Activated CD4-positive, alpha-beta memory T cell treated with anti-CD3 and anti-CD28 coated beads for 36 hours (primary cell): ENCODE measurements at regions of chr12 and their contacts with region 1.

Region 1: DNA sequence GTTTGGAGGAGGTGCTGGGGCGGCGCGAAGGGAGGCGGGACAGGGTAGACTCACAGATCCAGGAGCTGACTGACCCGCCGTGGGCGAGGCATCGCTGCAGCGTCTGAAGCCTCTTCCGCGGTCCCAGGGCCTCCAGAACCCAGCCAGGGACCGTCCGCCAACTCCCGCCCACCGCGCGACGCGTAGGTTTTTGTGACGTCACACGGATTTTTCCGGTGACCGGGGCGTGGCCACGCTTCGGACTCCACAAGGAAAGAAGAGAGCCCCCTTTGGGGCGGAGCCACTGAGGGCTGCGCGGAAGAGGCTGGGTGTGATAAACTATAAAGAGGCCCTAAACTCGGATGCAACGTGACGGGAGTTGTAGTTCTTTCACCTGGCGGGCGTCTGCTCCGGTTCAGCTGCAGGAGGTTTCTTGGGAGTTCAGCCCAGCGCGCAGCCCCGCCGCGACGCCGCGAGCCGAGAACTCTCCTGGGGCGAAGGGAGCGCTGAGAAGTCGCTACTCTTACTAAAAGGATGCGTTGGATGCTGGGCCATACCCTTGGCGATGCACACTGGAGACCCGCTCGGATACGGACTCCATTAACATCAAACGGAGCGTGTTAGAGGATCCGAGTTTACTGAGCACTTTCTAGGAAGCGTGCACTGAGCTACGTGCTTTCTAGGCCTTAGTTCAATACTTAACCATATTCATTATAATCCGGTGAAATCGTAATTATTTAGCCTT is at the start of gene AMN1:
- DNase-seq: peak; percentile 100
- H3K4me3 Mint-ChIP-seq: peak within 1 kb of the TSS; percentile 96
- H3K27ac Mint-ChIP-seq: peak within 1 kb of the TSS; percentile 97
- H3K4me1 Mint-ChIP-seq: peaks cover 41% of the 10 kb centered on the region
- H3K27me3 Mint-ChIP-seq: no peaks in the 10 kb centered on the region
- total RNA-seq, gene AMN1: 3.2 to 4.7 TPM

Region 2: GRCh38 chr12:31325877-31326631 is 403.0 kb before region 1 on chr12 and contains the start of gene SINHCAF:
- CTCF ChIA-PET with region 1: no interaction called
- POLR2A ChIA-PET with region 1: no interaction called
- intact Hi-C with region 1: loop called (anchors 5 kb)
- DNase-seq: peak; percentile 99
- H3K4me3 Mint-ChIP-seq: peak within 1 kb of the TSS; percentile 100
- H3K27ac Mint-ChIP-seq: peak within 1 kb of the TSS; percentile 99
- H3K4me1 Mint-ChIP-seq: peaks cover 24% of the 10 kb centered on the region
- H3K27me3 Mint-ChIP-seq: peaks cover 2% of the 10 kb centered on the region
- total RNA-seq, gene SINHCAF: 181 to 186 TPM

Region 3: DNA sequence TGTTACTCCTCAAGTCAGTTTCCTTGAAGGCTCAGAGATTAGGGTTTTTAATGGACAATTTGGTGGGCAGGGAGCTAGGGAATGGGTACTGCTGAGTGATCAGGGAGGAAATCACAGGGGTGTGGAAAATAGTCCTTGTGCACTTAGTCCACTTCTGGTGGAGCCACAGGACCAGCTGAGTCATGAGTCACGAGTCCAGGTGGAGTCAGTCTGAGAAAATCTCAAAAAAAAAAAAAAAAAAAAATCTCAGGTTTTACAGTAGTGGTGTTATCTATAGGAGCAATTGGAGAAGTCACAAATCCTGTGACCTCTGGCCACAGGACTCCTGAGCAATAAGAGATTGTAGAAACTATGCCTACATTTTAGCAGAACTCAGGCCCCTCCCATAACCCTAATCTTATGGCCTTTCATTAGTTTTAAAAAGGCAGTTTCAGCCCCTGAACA is 27.9 kb after region 1 on chr12:
- CTCF ChIA-PET with region 1: no interaction called
- POLR2A ChIA-PET with region 1: interaction called, 5 read pairs
- intact Hi-C with region 1: loop called (anchors 2 kb)
- DNase-seq: no peak
- H3K4me3 Mint-ChIP-seq: no peak overlapping the region
- H3K27ac Mint-ChIP-seq: no peak overlapping the region
- H3K4me1 Mint-ChIP-seq: peaks cover 11% of the 10 kb centered on the region
- H3K27me3 Mint-ChIP-seq: no peaks in the 10 kb centered on the region

Region 4: DNA sequence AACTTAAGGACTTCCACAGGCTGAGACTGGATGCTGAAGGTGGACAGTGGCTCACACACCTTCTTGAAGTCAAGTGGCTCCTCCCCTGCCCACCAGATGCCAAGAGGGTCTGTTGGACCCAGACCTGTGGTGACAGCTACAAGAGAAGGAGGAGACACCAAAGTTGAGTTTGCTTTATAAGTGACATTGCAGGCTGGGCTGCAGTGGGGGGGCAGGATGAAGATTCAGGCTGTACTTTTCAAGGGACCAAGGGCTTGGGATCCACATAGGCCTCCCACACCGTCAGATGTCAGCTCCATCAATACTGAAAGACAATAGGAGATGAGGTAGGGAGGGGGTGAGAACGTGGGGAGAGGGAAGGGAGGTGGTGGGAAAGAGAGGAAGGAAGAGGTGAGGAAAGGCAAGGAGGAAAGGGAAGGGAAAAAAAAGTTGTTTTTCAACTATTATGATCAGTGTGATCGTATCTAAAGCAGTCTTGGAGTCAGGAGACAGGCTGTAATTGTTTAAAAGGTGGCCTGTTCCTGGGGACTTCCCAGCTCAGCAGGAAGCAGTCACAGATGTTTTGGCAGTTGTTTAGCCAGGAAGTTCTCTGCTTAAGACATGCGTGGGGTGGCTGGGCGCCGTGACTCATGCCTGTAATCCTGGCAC is 146.0 kb after region 1 on chr12:
- CTCF ChIA-PET with region 1: no interaction called
- POLR2A ChIA-PET with region 1: interaction called, 3 read pairs
- intact Hi-C with region 1: loop called (anchors 2 kb)
- DNase-seq: peak; percentile 86
- H3K4me3 Mint-ChIP-seq: peak overlapping the region; percentile 47
- H3K27ac Mint-ChIP-seq: peak overlapping the region; percentile 97
- H3K4me1 Mint-ChIP-seq: peaks cover 27% of the 10 kb centered on the region
- H3K27me3 Mint-ChIP-seq: no peaks in the 10 kb centered on the region

Region 5: DNA sequence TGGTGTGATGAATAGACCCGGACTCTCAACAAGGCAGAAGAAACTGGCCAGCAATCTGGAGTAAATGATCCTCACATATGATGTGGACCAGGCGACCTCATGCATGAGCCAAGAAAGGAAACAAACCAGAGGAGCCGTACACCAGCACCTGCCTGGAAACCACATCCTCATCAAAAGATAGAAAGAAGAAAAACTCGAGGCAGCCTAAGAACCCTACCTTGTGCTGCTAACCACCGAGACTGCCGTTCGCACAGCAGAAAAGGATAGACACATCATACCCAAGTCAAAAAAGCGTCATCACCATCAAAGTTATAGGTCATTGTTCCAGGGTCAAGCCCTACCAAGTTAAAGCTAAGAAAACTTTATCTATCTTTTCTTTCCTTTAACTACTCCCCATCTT is 296.8 kb after region 1 on chr12:
- CTCF ChIA-PET with region 1: no interaction called
- POLR2A ChIA-PET with region 1: no interaction called
- intact Hi-C with region 1: loop called (anchors 5 kb)
- DNase-seq: peak; percentile 80
- H3K4me3 Mint-ChIP-seq: peak overlapping the region; percentile 42
- H3K27ac Mint-ChIP-seq: peak overlapping the region; percentile 74
- H3K4me1 Mint-ChIP-seq: peaks cover 24% of the 10 kb centered on the region
- H3K27me3 Mint-ChIP-seq: no peaks in the 10 kb centered on the region